MCF 10A (cell line): ENCODE measurements at regions of chr19 and their contacts with region 1.

Region 1: DNA sequence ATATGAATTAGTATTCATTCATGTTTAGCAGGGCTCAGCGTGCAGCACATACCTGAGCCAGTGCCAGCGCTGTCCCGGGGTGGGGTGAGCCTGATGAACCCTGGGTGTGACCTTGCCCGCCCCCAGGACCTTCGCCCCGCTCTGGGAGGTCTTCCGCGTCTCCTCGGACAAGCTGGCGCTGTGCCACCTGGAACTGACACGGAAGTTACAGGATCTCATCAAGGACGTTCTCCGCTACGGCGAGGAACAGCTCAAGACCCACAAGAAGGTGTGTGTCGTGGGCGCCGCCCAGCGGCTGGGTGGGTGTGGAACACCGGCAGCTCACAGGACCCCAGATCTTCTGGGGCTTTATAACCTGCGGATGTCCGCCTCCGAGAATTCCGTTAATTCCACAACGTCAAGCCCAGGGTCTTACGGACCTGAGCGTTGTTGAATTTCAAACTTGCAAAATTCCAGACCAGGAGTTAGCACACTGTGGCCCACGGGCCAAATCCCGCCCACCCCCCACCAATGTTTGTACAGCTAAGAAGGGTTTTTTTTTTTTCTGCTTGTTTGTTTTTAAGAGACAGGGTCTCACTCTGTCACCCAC is 15.4 kb downstream of the FCHO1 start:
- DNase-seq: peak; percentile 95
- H3K4me3 Mint-ChIP-seq: peak overlapping the region; percentile 70
- H3K27ac Mint-ChIP-seq: peak overlapping the region; percentile 50
- H3K4me1 Mint-ChIP-seq: peaks cover 14% of the 10 kb centered on the region
- H3K27me3 Mint-ChIP-seq: no peaks in the 10 kb centered on the region
- CTCF ChIP-seq: peak; percentile 92

Region 2: GRCh38 chr19:17390665-17391370 is 375.8 kb before region 1 on chr19:
- CTCF ChIA-PET with region 1: interaction called, 4 read pairs
- POLR2A ChIA-PET with region 1: no interaction called
- intact Hi-C with region 1: loop called (anchors 5 kb)
- DNase-seq: peak; percentile 94
- H3K4me3 Mint-ChIP-seq: peak overlapping the region; percentile 77
- H3K27ac Mint-ChIP-seq: no peak overlapping the region
- H3K4me1 Mint-ChIP-seq: peaks cover 10% of the 10 kb centered on the region
- H3K27me3 Mint-ChIP-seq: no peaks in the 10 kb centered on the region
- CTCF ChIP-seq: peak; percentile 67

Region 3: DNA sequence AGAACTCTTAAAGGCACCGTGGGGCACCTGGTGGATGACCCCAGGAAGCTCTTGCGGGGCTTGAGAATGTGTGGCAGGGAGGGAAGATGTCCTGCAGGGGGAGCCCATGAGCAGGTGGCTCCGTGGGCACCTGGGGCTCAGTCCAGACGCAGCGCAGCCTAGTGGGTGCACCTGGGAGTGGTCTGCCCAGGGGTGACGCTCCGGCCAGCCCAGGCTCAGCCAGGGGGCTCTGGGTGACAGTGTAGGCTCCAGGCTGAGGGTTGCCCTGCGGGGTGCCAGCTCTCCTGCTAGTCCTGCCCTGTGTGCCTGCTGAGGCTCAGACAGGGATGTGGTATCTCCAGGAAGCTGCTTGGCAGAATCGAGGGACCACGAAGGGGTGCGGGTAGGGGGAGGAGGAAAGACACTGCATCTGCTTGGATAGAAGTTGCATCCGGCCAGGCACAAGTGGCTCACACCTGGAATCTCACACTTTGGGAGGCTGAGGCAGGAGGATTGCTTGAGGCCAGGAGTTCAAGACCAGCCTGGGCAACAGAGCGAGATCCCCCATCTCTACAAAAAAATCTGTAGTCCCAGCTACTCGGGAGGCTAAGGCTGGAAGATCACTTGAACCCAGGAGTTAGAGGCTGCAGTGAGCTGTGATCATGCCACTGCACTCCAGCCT is 270.2 kb before region 1 on chr19:
- CTCF ChIA-PET with region 1: interaction called, 11 read pairs
- POLR2A ChIA-PET with region 1: no interaction called
- intact Hi-C with region 1: no loop called
- DNase-seq: peak; percentile 86
- H3K4me3 Mint-ChIP-seq: no peak overlapping the region
- H3K27ac Mint-ChIP-seq: no peak overlapping the region
- H3K4me1 Mint-ChIP-seq: peaks cover 15% of the 10 kb centered on the region
- H3K27me3 Mint-ChIP-seq: no peaks in the 10 kb centered on the region
- CTCF ChIP-seq: peak; percentile 90

Region 4: DNA sequence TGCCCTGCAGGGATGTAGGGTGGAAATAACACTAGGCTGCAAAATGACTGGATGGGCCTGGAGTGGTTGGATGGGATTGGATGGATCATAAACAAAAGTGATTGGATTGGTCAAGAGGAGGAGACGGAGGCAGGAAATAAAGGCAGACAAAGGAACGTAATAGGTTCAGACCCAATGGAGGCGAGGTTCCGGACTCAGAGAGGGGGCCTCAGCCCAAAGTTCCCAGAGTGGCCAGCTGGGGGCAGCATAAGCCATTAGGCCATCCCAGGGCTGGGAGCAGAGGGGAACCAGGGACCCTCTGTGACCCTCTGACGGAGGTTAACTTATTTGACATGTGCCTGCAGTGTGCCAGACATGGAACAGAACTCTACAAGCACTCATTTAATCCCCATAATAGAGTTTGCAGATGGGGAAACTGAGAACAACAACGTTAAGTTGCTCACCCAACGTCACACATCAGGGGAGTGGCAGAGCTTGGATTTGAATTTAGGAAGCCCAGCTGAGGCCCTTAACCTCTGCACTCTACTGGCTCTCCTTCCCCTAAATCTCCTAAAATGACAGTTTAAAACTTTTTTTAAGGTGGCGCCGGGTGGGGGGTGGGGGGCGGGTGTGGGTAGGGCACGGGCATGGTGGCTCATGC is 62.7 kb before region 1 on chr19:
- CTCF ChIA-PET with region 1: interaction called, 15 read pairs
- POLR2A ChIA-PET with region 1: no interaction called
- intact Hi-C with region 1: loop called (anchors 1 kb)
- DNase-seq: peak; percentile 46
- H3K4me3 Mint-ChIP-seq: no peak overlapping the region
- H3K27ac Mint-ChIP-seq: no peak overlapping the region
- H3K4me1 Mint-ChIP-seq: peaks cover 3% of the 10 kb centered on the region
- H3K27me3 Mint-ChIP-seq: peaks cover 16% of the 10 kb centered on the region
- CTCF ChIP-seq: peak; percentile 70

Region 5: GRCh38 chr19:17741456-17741855 is 25.2 kb before region 1 on chr19:
- CTCF ChIA-PET with region 1: interaction called, 10 read pairs
- POLR2A ChIA-PET with region 1: no interaction called
- intact Hi-C with region 1: no loop called
- DNase-seq: no peak
- H3K4me3 Mint-ChIP-seq: no peak overlapping the region
- H3K27ac Mint-ChIP-seq: no peak overlapping the region
- H3K4me1 Mint-ChIP-seq: no peaks in the 10 kb centered on the region
- H3K27me3 Mint-ChIP-seq: no peaks in the 10 kb centered on the region
- CTCF ChIP-seq: no peak